Caco-2 (cell line): ENCODE measurements at regions of chr2 and their contacts with region 1.

Region 1: GRCh38 chr2:13537771-13538349 is 821.1 kb downstream of the TRIB2 start:
- DNase-seq: peak; percentile 55 to 68
- H3K4me3 ChIP-seq: peak overlapping the region; percentile 8
- H3K4me3 Mint-ChIP-seq: peak overlapping the region; percentile 84
- H3K27ac Mint-ChIP-seq: peak overlapping the region; percentile 99
- H3K4me1 ChIP-seq: peaks cover 25% of the 10 kb centered on the region
- H3K4me1 Mint-ChIP-seq: peaks cover 29% of the 10 kb centered on the region
- H3K27me3 ChIP-seq: no peaks in the 10 kb centered on the region
- H3K27me3 Mint-ChIP-seq: no peaks in the 10 kb centered on the region
- CTCF ChIP-seq: no peak

Region 2: GRCh38 chr2:13413989-13414388 is 123.9 kb before region 1 on chr2:
- CTCF ChIA-PET with region 1: no interaction called
- POLR2A ChIA-PET with region 1: no interaction called
- intact Hi-C with region 1: no loop called
- DNase-seq: no peak
- H3K4me3 ChIP-seq: no peak overlapping the region
- H3K4me3 Mint-ChIP-seq: no peak overlapping the region
- H3K27ac Mint-ChIP-seq: no peak overlapping the region
- H3K4me1 ChIP-seq: no peaks in the 10 kb centered on the region
- H3K4me1 Mint-ChIP-seq: no peaks in the 10 kb centered on the region
- H3K27me3 ChIP-seq: no peaks in the 10 kb centered on the region
- H3K27me3 Mint-ChIP-seq: no peaks in the 10 kb centered on the region
- CTCF ChIP-seq: no peak

Region 3: DNA sequence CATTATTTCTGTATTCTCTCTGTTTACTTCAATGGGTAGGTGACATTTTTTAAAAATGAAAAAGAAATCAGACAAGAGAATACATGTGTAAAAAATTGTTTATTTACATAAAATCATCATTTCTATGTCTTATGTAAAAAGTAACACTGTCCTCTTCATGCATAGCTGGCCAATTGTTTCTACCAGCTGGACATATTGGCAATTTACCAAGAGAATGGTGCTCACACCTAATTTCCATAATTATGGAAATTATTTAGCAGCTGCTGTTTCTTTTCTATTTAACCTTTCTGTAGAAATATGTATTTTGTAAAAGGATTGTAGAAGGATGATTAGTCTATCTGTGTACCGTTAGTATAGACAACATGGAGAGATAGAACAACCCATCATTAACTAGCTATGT is 29.2 kb before region 1 on chr2:
- CTCF ChIA-PET with region 1: no interaction called
- POLR2A ChIA-PET with region 1: no interaction called
- intact Hi-C with region 1: loop called (anchors 1 kb)
- DNase-seq: no peak
- H3K4me3 ChIP-seq: no peak overlapping the region
- H3K4me3 Mint-ChIP-seq: no peak overlapping the region
- H3K27ac Mint-ChIP-seq: no peak overlapping the region
- H3K4me1 ChIP-seq: no peaks in the 10 kb centered on the region
- H3K4me1 Mint-ChIP-seq: no peaks in the 10 kb centered on the region
- H3K27me3 ChIP-seq: no peaks in the 10 kb centered on the region
- H3K27me3 Mint-ChIP-seq: no peaks in the 10 kb centered on the region
- CTCF ChIP-seq: no peak

Region 4: GRCh38 chr2:13558368-13558767 is 20.5 kb after region 1 on chr2:
- CTCF ChIA-PET with region 1: no interaction called
- POLR2A ChIA-PET with region 1: no interaction called
- intact Hi-C with region 1: loop called (anchors 1 kb)
- DNase-seq: peak; percentile 67 to 75
- H3K4me3 ChIP-seq: no peak overlapping the region
- H3K4me3 Mint-ChIP-seq: peak overlapping the region; percentile 22
- H3K27ac Mint-ChIP-seq: peak overlapping the region; percentile 91
- H3K4me1 ChIP-seq: peaks cover 27% of the 10 kb centered on the region
- H3K4me1 Mint-ChIP-seq: peaks cover 20% of the 10 kb centered on the region
- H3K27me3 ChIP-seq: no peaks in the 10 kb centered on the region
- H3K27me3 Mint-ChIP-seq: no peaks in the 10 kb centered on the region
- CTCF ChIP-seq: no peak